ENCODE measurements at regions of chr5 and their contacts with region 1.

Region 1: GRCh38 chr5:149141224-149141956 is at the start of gene ABLIM3:
- DNase-seq: no peak
- H3K4me3 ChIP-seq: peak within 1 kb of the TSS; percentile 94
- H3K27ac ChIP-seq: peak within 1 kb of the TSS; percentile 69
- H3K27me3 ChIP-seq: no peaks in the 10 kb centered on the region
- CTCF ChIP-seq: peak; percentile 76
- polyA plus RNA-seq, gene ABLIM3: 52.6 and 60.6 TPM in 2 replicates

Region 2: DNA sequence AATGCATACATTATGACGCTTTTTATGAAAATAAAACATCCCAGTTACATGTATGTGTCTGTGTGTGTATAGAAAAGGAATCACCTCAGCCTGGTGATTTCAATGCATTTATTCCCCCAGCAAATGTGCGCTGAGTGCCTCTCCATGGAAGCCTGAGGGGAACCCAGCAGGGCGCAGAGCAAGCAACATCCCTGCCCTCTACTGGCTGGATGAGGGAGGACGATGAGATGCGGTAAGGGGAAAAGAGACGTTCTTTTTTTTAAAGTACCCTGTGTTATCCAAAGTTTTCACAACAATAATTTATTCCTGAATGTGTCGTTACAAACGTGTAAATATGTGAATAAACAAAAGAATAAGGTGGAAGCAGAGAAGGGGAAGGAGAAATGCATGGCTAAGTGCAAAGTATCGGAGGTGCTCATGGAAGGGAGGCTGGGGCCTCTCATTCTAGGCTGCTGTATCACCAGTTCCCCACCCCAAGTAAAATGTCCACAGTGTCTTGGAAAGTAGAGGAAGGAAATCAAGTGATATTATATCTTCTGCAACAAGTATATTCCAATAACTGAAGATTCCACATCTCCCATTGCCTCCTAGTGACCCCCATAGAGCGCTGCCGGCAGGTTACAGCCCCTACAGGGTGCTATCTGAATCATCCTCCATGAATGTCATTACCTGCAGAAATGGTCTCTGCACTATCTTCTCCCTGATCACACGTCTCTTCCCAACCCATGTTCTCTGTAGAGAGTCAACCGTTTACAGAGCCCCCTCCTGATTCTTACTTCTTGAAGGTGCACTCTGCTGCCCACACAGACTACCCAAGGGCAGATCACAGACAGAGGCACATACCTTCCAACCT is 13.1 kb before region 1 on chr5:
- CTCF ChIA-PET with region 1: interaction called, 31 read pairs
- POLR2A ChIA-PET with region 1: interaction called, 3 read pairs
- DNase-seq: no peak
- H3K4me3 ChIP-seq: no peak overlapping the region
- H3K27ac ChIP-seq: no peak overlapping the region
- H3K27me3 ChIP-seq: no peaks in the 10 kb centered on the region
- CTCF ChIP-seq: peak; percentile 92

Region 3: DNA sequence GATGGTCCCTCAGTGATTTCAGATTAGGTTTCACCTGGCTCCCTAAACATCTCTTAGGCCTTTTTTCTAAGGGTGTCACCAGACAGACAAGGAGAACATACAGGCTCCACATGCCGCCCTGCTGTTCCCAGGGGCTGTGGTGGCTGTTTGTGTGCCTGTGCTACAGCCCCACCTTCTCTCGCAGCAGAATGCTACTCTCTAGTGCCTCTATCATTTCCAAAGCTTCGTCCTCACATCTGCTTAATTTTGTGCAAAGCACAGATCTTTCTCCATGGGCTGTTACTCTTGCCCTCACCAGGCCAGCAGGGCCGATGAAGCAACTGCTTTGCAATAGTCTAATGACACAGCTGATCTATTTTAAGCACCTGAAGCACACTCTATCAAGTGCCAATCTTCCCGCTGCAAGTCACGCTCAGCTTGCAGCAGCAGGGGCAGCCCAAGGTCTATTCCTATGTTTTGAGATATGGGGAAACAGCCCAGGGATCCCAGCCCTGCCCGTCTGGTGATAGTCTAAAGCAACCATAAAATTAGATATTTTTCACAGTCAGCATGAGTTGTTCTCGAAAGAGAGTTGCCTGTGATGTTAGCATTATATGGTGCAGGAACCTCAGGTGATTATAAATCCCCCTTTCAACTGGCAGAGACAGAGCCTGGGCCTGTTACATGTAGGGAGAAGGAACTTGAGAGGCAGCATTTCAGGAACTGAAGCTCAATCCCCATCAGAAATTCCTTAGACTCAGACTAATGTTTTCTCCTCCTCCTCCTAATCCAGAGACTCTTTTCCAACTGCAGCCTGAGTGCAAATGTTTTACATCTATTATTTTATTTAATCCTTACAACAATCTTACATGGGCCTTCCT is 12.6 kb after region 1 on chr5:
- CTCF ChIA-PET with region 1: interaction called, 70 read pairs
- POLR2A ChIA-PET with region 1: interaction called, 3 read pairs
- DNase-seq: no peak
- H3K4me3 ChIP-seq: no peak overlapping the region
- H3K27ac ChIP-seq: peak overlapping the region; percentile 83
- H3K27me3 ChIP-seq: no peaks in the 10 kb centered on the region
- CTCF ChIP-seq: no peak

Region 4: DNA sequence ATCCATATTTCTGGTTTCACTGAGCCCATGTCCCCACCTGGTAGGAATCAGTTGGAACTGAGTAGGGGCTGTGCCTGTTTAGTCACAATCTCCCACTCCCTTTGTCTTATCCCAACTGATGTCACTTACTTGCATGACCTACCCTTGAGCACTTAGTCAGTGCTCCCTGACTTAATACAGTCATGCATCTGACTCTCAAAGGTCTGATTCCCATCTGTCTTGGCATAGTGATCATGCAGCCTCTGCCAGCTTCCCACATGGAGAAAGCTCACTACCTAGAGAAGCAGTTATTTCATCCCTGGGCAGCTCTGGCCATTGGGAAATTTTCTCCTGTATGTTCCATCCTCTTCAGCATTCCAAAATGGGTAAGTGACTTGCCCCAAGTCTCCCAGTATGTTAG is 24.7 kb after region 1 on chr5:
- CTCF ChIA-PET with region 1: interaction called, 70 read pairs
- POLR2A ChIA-PET with region 1: no interaction called
- DNase-seq: no peak
- H3K4me3 ChIP-seq: no peak overlapping the region
- H3K27ac ChIP-seq: no peak overlapping the region
- H3K27me3 ChIP-seq: no peaks in the 10 kb centered on the region
- CTCF ChIP-seq: no peak

Region 5: DNA sequence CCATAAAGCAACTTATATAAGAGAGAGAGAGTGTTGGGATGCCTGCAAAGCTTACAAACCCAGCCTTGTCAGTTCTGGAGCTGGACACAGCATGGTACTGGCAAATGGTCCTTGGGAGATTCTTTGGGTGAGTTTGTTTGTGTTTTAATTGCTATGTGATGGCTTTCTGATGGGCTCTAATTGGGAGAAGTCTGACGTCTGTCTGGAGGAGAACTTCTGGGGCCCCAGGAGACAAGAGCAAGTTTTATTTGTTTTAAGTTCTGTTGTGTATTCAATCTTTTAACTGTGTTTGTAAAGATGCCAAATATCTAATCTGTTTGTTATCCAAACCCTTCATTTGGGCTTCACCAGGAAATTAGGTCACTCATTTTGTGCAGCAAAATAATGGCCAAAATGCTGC is 79.9 kb after region 1 on chr5:
- CTCF ChIA-PET with region 1: interaction called, 29 read pairs
- POLR2A ChIA-PET with region 1: no interaction called
- DNase-seq: peak; percentile 49
- H3K4me3 ChIP-seq: no peak overlapping the region
- H3K27ac ChIP-seq: peak overlapping the region; percentile 77
- H3K27me3 ChIP-seq: no peaks in the 10 kb centered on the region
- CTCF ChIP-seq: no peak

Region 6: DNA sequence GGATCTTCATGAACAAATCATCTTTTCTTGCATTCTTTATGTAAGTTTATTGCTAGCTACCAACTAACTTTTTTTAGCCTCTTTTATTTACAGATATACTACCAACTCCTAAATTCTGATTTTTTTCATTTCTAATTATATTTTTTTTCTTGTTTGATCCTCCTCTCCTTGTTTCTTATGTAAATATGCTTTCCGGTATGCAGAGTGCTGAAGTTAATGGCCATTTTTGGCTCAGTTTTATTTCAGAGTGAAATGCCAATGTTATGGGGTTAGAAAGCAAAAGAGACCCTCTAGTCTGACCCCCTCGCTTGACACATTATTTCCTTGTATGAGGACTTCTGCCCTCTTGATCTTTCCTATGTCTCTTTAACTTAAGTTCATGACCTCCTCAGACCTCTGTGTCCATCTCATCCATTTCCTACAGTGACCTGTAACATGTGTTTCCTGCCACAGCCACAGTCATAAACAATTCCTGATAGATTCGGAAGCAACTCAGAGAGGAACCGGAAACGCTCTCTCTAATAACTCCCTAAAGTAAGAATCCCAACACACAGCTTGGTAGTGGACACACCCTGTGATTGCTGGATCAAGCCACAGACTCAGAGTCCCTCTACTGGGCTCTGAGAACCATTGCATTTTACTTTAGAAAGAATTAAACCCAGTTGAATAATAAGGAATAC is 87.4 kb after region 1 on chr5:
- CTCF ChIA-PET with region 1: interaction called, 103 read pairs
- POLR2A ChIA-PET with region 1: no interaction called
- DNase-seq: peak; percentile 82
- H3K4me3 ChIP-seq: no peak overlapping the region
- H3K27ac ChIP-seq: no peak overlapping the region
- H3K27me3 ChIP-seq: no peaks in the 10 kb centered on the region
- CTCF ChIP-seq: peak; percentile 90

Region 7: DNA sequence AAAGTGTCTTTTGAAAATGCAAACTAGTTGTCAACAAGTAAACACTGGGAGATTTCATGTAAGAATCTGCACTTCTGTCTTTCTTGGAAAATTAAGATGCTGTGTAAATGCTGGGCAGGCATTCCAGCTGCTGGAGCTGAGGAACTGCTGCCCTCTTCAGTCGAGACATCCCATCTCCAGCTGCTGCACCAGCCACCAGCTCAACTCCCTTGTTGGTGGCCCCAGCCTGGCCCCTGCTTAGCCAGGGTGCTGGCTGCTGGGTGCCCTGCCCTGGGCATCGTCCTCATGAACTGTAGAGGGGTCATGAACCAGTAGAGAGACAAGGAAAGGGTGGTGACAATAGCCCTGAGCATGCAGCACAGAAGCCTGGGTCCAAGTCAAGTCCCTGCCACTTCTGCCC is 97.2 kb after region 1 on chr5:
- CTCF ChIA-PET with region 1: interaction called, 103 read pairs
- POLR2A ChIA-PET with region 1: interaction called, 3 read pairs
- DNase-seq: no peak
- H3K4me3 ChIP-seq: no peak overlapping the region
- H3K27ac ChIP-seq: no peak overlapping the region
- H3K27me3 ChIP-seq: no peaks in the 10 kb centered on the region
- CTCF ChIP-seq: 0 out of 2 replicates have a peak, but pooled peaks have one; percentile 18